ENCODE measurements at regions of chr2 and their contacts with region 1.

Region 1: DNA sequence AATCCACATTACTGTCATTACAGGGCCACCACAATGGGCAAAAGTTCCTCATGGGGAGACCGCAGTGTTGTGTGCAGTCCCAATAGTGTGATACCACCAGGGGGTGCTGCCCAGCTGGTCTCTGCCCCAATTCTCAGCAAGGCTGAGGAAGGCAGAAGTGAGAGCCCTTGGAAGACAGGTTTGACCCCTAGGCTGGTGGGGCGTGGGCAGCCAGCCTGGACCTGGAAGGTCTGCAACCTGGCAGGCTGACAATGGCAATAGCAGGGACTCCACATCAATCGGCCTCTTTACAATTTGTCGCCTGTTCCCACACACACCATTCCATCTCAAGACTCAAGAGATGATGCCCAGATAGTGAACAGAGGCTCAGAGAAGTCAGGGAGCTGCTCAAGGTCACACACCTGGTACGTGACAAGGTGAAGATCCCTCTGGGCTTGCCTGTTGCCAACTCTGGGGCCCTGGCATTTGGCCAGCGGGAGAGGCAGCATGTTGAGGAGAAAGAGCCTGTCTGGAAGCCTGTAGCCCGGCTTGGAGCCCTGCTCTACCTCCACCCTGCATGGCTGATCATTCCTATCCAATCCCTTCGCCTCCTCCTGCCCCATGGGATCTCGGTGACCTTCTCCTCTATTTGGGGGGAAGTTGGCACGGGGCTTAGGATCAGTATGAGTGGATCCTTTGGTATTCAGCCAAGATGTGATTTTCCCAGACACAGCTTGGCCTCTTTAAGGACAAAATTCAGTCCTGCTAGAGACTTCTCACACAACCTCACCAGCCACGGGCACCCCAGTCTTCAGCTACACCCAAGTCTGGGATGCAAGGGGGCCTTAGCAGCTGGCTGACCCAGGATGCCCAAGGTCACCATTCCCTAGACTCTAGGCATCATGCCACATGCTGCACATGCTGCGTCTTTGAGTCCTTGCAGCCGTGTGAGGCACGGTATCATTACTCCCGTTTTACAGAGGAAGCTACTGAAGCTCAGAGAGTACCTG is 2.9 kb upstream of the ATOH8 start:
- H3K4me3 ChIP-seq: no peak overlapping the region
- H3K27ac ChIP-seq: no peak overlapping the region
- H3K4me1 ChIP-seq: peaks cover 12% of the 10 kb centered on the region
- CTCF ChIP-seq: peak; percentile 73; the same call in 1 of the 2 replicates

Region 2: GRCh38 chr2:85723707-85724360 is 27.0 kb before region 1 on chr2:
- CTCF ChIA-PET with region 1: interaction called, 45 read pairs
- POLR2A ChIA-PET with region 1: no interaction called
- H3K4me3 ChIP-seq: no peak overlapping the region
- H3K27ac ChIP-seq: no peak overlapping the region
- H3K4me1 ChIP-seq: no peaks in the 10 kb centered on the region
- CTCF ChIP-seq: no peak

Region 3: DNA sequence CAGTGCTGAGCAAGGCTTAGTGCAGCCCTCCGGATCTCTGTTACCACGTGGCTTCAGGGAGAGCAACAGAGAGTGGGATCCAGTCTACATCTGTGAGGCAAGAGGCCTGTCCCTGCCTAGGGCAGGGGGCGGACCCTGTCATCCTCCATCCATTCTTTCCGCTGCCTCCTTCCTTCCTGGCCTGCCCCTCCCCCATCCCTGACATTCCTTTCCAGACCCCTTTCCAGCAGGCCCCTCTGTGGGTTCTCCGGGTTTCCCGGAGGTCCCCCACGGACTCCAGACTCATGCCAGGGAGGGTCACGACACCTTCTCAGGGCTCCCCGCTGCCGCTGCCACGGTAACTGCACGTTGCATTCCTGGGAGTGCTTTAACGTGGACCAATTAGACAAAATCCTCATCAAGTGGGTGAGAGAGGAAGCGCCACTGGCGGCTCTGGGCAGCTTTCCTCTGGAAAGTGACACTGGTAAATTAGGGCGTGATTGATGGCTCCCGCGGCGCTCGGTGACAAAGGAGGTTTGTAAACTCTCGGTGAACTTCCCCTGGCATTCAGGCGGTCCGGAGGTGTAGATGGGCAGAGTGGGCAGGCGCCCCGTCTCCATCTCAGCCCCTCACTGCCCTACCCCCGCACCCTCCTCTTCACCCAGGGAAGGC is 14.3 kb after region 1 on chr2:
- CTCF ChIA-PET with region 1: interaction called, 105 read pairs
- POLR2A ChIA-PET with region 1: interaction called, 14 read pairs
- H3K4me3 ChIP-seq: no peak overlapping the region
- H3K27ac ChIP-seq: no peak overlapping the region; the same call in 1 of the 2 replicates
- H3K4me1 ChIP-seq: peaks cover 20% of the 10 kb centered on the region
- CTCF ChIP-seq: no peak

Region 4: DNA sequence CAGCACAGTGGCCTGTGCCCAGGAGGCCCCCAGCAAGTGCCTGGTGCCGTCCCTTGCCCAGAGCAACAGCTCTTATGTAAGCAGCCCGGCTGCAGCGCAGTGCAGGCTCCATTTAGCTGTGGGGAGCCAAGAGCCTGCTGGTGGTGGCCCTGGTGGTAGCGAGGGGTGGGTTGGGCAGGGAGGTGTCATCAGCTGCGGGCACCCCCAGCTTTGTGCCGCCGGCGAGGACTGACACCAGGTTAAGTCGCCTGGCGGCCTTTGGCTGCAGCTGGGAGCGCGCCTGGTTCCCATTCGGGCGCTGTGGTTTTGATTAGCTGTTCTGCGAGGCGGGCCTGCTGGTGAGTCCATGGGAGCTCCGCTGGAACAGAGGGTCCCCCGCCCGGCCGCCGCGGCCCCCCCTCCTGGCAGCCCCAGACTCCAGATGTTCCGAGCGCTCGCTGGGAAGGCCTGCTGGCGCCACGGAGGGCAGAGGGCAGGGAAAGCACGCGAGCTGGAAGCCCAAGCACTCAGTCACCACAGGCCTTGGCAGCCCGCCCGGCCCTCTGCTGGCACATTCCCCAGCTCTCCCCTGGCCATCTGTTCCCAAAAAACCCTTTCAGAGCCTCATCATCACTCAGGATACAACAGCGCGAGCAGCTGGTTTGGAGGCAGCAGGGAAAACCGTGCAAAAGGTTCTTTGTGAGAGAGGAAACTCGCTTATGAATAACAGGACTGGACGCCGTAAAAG is 21.3 kb after region 1 on chr2:
- CTCF ChIA-PET with region 1: interaction called, 105 read pairs
- POLR2A ChIA-PET with region 1: interaction called, 14 read pairs
- H3K4me3 ChIP-seq: no peak overlapping the region
- H3K27ac ChIP-seq: peak overlapping the region; percentile 80
- H3K4me1 ChIP-seq: peaks cover 41% of the 10 kb centered on the region
- CTCF ChIP-seq: peak; percentile 91

Region 5: GRCh38 chr2:85797921-85798320 is 47.0 kb after region 1 on chr2:
- CTCF ChIA-PET with region 1: interaction called, 20 read pairs
- POLR2A ChIA-PET with region 1: no interaction called
- H3K4me3 ChIP-seq: no peak overlapping the region
- H3K27ac ChIP-seq: no peak overlapping the region
- H3K4me1 ChIP-seq: no peaks in the 10 kb centered on the region; the same call in 1 of the 2 replicates
- CTCF ChIP-seq: no peak

Region 6: DNA sequence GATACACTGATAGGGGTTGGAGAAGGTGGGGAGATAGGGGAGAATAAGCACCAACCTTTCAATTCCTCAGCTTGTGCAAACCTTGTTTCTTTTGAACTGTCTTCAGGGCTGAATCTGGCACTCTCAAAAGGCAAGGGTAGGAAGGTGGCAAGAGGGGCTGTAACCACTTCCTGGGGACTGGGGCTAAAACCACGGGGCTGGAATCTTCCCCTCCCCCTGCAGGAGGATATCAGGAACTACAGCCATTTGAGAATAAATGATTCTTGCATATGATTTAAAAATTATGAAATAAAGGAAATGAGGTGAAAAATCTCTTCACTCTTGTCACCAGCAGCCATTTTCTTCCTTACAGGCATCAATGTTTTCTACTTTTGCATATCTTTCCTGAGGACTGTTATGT is 53.7 kb after region 1 on chr2:
- CTCF ChIA-PET with region 1: interaction called, 15 read pairs
- POLR2A ChIA-PET with region 1: interaction called, 3 read pairs
- H3K4me3 ChIP-seq: no peak overlapping the region
- H3K27ac ChIP-seq: no peak overlapping the region
- H3K4me1 ChIP-seq: no peaks in the 10 kb centered on the region
- CTCF ChIP-seq: no peak

Region 7: GRCh38 chr2:85813982-85814801 is 63.3 kb after region 1 on chr2:
- CTCF ChIA-PET with region 1: interaction called, 125 read pairs
- POLR2A ChIA-PET with region 1: no interaction called
- H3K4me3 ChIP-seq: no peak overlapping the region
- H3K27ac ChIP-seq: no peak overlapping the region
- H3K4me1 ChIP-seq: no peaks in the 10 kb centered on the region
- CTCF ChIP-seq: peak; percentile 85

Region 8: DNA sequence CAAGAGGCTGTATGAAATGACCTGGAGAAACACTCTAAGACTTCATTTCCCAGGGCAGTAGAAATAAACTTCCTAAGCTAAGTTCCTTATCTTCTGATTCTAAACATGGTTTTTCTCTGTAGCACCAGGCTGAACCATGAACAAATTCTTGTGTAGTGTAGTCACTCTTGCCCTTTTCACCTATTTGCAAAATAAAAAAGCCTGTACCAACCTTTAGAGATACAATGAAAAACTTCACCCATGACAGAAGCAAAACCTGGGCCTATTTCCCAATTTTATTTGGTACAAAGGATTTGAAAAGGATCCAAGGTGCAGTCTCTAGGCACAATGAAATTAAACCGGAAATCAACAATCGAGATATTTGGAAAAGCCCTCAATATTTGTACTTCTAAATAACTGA is 311.2 kb after region 1 on chr2:
- CTCF ChIA-PET with region 1: no interaction called
- POLR2A ChIA-PET with region 1: no interaction called
- H3K4me3 ChIP-seq: no peak overlapping the region
- H3K27ac ChIP-seq: no peak overlapping the region
- H3K4me1 ChIP-seq: no peaks in the 10 kb centered on the region
- CTCF ChIP-seq: no peak

Measured in HEK293 (cell line).